ENCODE measurements at regions of chr4 and their contacts with region 1.

Region 1: GRCh38 chr4:41661442-41662076 is 87.0 kb downstream of the PHOX2B start:
- DNase-seq: peak; percentile 73
- ATAC-seq: peak; percentile 68

Region 2: GRCh38 chr4:41268022-41268421 is 393.5 kb before region 1 on chr4:
- intact Hi-C with region 1: loop called (anchors 5 kb)
- DNase-seq: no peak
- ATAC-seq: peak; percentile 29

Region 3: GRCh38 chr4:41281038-41281634 is 380.4 kb before region 1 on chr4:
- intact Hi-C with region 1: loop called (anchors 5 kb)
- DNase-seq: no peak
- ATAC-seq: peak; percentile 96

Measured in Right ventricle myocardium superior (tissue), 1 donor.